GM12878 (cell line): ENCODE measurements at regions of chr1 and their contacts with region 1.

Region 1: GRCh38 chr1:32240140-32240951 is 6.7 kb upstream of the FAM167B start:
- DNase-seq: no peak
- ATAC-seq: peak; percentile 81
- H3K4me3 ChIP-seq: peak overlapping the region; percentile 72
- H3K27ac ChIP-seq: peak overlapping the region; percentile 13; the same call in 1 of the 2 replicates
- H3K4me1 ChIP-seq: peaks cover 21% of the 10 kb centered on the region
- H3K27me3 ChIP-seq: no peaks in the 10 kb centered on the region
- CTCF ChIP-seq: peak in 2 of 3 experiments; percentile 27 to 46; a peak in 3 of 6 replicates
- EP300 ChIP-seq: no peak
- POLR2A ChIP-seq: no peak; the same call in 1 of the 2 replicates
- RAD21 ChIP-seq: no peak

Region 2: GRCh38 chr1:32255072-32256071 is 15.0 kb after region 1 on chr1:
- CTCF ChIA-PET with region 1: interaction called, 50 read pairs
- POLR2A ChIA-PET with region 1: interaction called, 8 read pairs
- RAD21 ChIA-PET with region 1: interaction called, 34 read pairs
- SMC1A ChIA-PET with region 1: interaction called, 15 read pairs
- in situ Hi-C with region 1: no loop called
- intact Hi-C with region 1: no loop called
- DNase-seq: no peak
- ATAC-seq: peak; percentile 1; the same call in 2 of the 3 replicates
- H3K4me3 ChIP-seq: peak overlapping the region; percentile 33; the same call in 1 of the 2 replicates
- H3K27ac ChIP-seq: peak overlapping the region; percentile 89
- H3K4me1 ChIP-seq: peaks cover 66% of the 10 kb centered on the region
- H3K27me3 ChIP-seq: no peaks in the 10 kb centered on the region
- CTCF ChIP-seq: no peak
- EP300 ChIP-seq: no peak
- POLR2A ChIP-seq: no peak
- RAD21 ChIP-seq: no peak

Region 3: GRCh38 chr1:32525053-32525452 is 284.7 kb after region 1 on chr1:
- CTCF ChIA-PET with region 1: no interaction called
- POLR2A ChIA-PET with region 1: no interaction called
- RAD21 ChIA-PET with region 1: no interaction called
- SMC1A ChIA-PET with region 1: no interaction called
- in situ Hi-C with region 1: no loop called
- intact Hi-C with region 1: no loop called
- DNase-seq: no peak
- ATAC-seq: no peak
- H3K4me3 ChIP-seq: no peak overlapping the region
- H3K27ac ChIP-seq: no peak overlapping the region
- H3K4me1 ChIP-seq: peaks cover 5% of the 10 kb centered on the region
- H3K27me3 ChIP-seq: no peaks in the 10 kb centered on the region
- CTCF ChIP-seq: no peak
- EP300 ChIP-seq: no peak
- POLR2A ChIP-seq: no peak
- RAD21 ChIP-seq: no peak